ENCODE measurements at regions of chr15 and their contacts with region 1.

Region 1: DNA sequence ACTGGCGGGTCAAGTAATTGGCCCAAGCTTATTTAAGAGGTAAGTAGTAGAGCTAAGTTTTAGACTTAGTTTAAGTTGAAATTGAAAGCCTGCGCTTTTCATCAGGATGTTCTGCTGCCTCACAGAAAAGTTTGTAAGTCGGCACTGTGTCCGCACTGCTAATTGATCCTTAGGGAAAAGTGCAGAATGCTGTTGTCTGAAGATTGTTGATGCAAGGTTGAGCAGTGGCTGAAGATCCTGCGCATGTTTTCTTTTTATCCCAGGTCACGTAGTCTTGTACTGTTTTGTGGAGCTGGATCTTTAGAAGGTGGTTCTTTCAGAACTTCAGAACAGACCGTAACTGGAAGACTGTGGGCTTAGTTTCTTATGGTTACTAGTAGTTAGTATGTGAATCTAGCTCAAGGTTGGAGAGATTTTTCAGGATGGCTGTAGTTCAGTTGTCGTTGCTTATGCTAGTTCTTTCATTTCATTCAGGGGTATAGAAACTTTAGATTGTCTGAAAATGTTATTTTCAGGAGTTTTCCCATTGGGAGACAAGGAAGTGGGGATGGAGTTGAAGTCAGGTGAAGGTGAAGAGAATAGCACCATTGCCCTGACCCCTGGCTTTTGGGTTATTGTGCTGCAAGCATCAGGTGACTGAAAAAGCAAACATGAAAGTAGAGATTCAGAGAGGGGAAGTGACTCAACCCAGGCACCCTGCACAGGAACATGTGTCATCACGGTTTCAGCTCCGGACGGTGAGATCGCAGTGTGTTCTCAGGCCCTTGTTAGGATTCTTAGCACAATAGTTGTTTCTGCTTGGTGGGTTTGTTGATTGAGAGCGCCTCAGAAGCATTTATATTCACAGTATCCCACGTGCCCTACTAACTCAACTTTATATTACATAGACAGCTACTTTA is 32.8 kb downstream of the AKAP13 start:
- DNase-seq: peak; percentile 89
- H3K4me3 Mint-ChIP-seq: peak overlapping the region; percentile 3
- H3K27ac Mint-ChIP-seq: peak overlapping the region; percentile 33
- H3K4me1 Mint-ChIP-seq: peaks cover 75% of the 10 kb centered on the region
- H3K27me3 Mint-ChIP-seq: no peaks in the 10 kb centered on the region

Region 2: DNA sequence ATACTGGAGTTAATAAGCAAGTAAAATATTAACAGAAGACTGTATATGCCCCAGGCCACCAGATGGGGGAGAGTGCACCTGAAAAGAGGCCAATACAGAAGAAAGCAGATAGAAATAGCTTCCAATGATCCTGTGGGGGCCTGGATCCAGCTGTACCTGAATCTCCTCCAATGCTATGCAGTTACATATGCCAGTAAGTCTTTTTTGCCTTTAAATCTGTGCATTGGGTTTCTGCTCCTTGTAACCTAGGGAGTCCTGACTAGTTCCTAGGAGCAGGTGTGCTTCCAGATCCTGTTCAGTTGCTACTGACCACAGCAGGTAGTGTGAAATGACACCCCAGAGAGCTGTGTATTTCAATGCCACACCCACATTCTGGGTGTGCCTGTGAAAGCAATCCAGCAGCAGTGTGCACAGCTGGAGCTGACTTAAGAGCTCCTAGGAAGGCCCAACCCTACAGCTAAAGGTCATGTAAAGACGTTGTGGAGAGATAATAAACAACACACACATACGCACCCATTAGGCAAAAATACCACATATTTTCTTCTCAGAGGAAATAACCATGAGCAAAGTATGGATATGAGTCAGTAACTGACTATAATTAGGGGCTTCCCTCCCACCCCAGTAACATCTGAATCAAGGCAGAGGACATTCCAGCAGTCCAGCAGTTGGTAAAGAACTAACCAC is 95.0 kb before region 1 on chr15:
- CTCF ChIA-PET with region 1: interaction called, 9 read pairs
- intact Hi-C with region 1: loop called (anchors 1 kb)
- DNase-seq: peak; percentile 40
- H3K4me3 Mint-ChIP-seq: no peak overlapping the region
- H3K27ac Mint-ChIP-seq: no peak overlapping the region
- H3K4me1 Mint-ChIP-seq: peaks cover 43% of the 10 kb centered on the region
- H3K27me3 Mint-ChIP-seq: no peaks in the 10 kb centered on the region

Region 3: GRCh38 chr15:85380217-85380811 is 32.9 kb before region 1 on chr15 and contains the start of gene AKAP13:
- CTCF ChIA-PET with region 1: interaction called, 30 read pairs
- intact Hi-C with region 1: loop called (anchors 1 kb)
- DNase-seq: peak; percentile 97
- H3K4me3 Mint-ChIP-seq: peak within 1 kb of the TSS; percentile 91
- H3K27ac Mint-ChIP-seq: peak within 1 kb of the TSS; percentile 90
- H3K4me1 Mint-ChIP-seq: peaks cover 51% of the 10 kb centered on the region
- H3K27me3 Mint-ChIP-seq: no peaks in the 10 kb centered on the region
- total RNA-seq, gene AKAP13: 79.4 to 83.2 TPM

Region 4: DNA sequence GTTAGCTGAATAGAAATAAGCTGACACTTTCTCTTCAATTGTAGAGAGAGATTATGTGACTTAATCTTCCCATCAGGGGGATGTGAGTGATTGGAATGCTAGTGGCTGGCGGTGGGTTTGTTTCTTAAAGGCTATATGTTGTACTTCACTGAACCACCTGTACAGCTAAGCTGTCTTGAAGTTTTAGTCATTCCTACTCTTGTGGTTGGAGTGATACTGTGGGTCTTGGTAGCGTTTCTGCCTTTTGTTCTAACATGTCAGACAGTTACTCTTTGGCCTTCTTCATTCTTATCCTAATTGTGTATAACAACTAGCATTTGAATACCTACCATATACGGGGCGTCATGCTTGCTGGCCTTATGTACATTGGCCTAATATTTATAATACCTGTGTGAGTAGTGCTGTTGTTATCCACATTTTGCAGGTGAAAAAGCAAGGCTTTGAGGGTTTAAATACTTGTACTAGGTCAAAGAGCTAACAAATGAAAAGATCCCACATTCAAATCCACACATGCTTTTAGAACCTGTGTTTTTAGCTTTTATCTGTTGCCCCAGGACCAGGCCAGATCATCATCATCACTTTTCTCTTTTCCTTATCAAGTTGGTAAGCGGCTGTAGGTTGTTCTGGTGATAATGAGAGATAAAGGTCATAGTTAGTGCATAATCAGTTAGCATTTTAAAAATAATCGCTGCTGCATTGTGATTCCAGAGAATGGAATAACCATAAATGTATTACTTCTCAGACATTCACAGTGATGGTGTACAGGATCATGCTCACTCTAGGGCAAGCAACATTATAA is 17.4 kb after region 1 on chr15:
- CTCF ChIA-PET with region 1: interaction called, 13 read pairs
- intact Hi-C with region 1: loop called (anchors 1 kb)
- DNase-seq: peak; percentile 65
- H3K4me3 Mint-ChIP-seq: no peak overlapping the region
- H3K27ac Mint-ChIP-seq: no peak overlapping the region
- H3K4me1 Mint-ChIP-seq: peaks cover 54% of the 10 kb centered on the region
- H3K27me3 Mint-ChIP-seq: no peaks in the 10 kb centered on the region

Region 5: GRCh38 chr15:85485956-85486567 is 72.9 kb after region 1 on chr15:
- CTCF ChIA-PET with region 1: interaction called, 11 read pairs
- intact Hi-C with region 1: no loop called
- DNase-seq: peak; percentile 76
- H3K4me3 Mint-ChIP-seq: no peak overlapping the region
- H3K27ac Mint-ChIP-seq: no peak overlapping the region
- H3K4me1 Mint-ChIP-seq: peaks cover 61% of the 10 kb centered on the region
- H3K27me3 Mint-ChIP-seq: no peaks in the 10 kb centered on the region

Region 6: DNA sequence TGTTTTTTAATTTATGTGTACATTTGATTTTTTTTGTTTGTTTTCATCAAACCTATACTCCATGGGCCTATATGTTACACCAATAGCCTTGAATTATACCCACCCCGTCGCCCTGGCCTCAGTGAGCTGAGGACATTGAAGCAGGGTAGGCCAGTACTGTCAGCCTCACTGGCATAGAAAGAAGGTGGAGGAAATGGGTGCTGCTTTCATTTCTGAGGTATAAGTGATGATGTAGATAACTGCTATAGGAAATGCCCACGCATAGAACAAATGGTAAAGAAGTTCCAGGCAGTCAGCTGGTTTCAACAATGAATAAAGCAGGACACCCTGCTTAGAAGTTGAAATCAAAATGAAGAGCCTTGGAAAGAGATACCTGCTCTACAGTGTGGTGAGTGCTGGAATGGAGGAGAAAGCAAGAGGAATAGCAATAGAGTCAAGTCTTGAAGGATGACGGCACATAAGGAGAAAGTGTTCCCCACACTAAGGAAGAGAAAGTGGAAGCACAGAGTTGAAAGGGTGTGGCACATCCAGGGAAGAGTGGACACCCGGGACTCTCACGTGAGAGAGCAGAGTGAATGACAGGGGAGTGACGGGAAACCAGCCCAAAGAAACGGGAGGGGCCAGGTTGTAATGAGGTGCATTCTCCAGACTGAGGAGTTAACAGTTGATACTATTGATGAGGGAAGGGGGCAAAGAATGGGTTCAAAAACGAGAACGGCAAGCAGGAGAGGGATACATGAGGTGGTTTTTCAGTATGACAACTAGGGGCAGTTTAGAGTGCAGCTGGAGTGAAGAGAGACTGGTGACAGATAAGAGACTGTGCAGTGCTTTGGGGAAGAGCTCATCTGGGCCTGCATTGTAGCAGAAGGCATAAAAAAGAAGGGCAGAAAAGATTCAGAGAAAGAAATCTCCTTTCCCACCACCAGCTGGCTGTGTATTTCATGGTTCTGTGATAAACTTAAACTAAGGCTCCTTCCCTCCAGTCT is 311.0 kb after region 1 on chr15:
- CTCF ChIA-PET with region 1: interaction called, 3 read pairs
- intact Hi-C with region 1: loop called (anchors 5 kb)
- DNase-seq: peak; percentile 41
- H3K4me3 Mint-ChIP-seq: peak overlapping the region; percentile 43
- H3K27ac Mint-ChIP-seq: peak overlapping the region; percentile 97
- H3K4me1 Mint-ChIP-seq: peaks cover 67% of the 10 kb centered on the region
- H3K27me3 Mint-ChIP-seq: no peaks in the 10 kb centered on the region